GM18951 (cell line): ENCODE measurements at regions of chr7 and their contacts with region 1.

Region 1: DNA sequence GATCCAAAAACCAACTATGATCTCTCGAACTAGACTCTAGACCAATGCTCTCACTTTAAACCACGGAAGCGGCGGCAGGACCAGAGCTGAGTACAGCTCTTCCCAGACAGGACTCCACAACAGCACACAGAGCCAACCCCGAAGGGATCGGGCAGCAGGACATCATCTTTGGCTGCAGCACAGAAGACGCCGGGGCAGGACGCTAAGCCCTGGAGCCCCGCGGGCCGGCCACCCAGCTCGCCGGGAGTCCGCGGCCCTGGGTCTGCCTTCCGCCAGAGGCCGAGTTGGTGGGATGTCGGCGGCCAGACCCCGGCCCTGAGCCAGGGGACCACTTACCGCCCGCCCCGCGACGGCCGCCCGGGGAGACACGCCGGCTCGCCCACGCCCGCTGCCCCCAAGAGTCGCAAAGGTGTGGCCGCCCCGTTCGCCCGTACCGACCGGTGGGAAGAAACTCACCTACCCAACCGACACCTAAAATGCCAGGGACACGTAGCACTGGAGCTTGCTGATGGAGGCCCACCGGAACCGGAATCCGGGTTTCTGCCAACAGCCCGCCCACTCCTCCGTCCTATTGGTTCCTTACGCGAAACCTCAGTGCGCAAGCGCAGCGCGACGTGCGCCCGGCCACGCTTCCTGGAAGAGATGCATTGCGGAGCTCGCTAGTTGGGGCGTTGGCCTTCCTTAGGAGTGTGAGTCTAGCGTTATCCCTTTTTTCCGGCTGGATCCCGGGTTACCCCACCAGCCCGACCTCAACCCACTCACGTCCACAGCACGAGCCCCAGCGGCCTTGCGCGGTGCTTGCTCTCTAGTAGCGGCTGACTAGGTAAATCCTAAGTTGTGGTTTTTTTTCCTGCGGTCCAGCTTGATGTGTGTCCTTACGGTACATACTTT is at the start of gene SEC61G:
- POLR2A ChIP-seq: peak; percentile 96

Region 2: DNA sequence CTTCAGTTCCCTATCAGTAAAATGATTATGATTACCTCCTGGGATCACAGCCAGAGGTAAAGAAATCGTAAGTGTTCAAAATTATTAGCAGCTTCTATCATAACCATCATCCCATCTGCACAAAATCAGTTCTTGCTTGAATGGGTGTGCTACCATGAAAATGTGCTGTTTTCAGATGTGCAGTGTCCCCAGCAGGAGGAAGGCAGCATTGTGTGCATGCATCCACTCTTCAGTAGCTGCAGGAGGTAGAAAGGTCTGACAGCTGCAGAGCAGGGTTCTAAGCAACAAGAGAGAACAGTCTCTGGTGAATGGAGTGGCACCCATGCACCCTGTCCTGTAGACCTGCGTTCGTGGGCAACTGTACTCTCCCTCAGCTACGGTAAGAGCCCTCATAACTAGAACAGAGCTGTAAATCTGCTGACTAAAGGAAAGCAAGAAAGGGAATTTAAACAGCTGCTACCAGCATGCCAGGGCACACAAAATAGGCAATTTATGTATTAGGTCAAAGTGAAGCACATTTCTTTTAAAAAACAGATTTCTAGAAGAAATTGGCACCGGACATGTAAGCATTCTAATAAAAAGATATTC is 195.5 kb before region 1 on chr7:
- in situ Hi-C with region 1: no loop called
- POLR2A ChIP-seq: no peak

Region 3: DNA sequence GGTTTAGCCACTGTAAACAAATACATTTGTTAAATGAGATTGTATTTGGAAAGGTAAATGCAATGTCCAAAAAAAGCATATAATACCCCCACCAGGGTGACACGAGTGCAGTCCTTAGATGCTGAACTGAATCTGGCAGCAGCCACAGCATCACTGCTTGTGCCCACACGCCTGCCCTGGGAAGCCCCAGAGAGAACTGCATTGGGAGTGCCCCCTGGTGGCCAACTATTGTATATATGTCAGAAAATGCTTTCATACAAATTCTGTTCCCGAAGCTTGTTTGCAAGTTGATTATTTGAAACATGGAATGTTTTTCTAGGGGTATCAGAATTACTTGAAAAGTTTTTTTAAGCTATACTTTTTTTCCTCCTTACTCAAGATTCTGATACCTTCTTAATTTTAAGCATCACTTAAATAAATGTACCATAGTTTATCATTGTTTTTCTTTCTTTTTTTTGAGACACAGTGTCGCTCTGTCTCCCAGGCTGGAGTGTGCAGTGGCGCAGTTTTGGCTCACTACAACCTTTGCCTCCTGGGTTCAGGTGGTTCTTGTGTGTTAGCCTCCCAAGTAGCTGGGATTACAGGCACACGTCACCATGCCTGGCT is 656.3 kb after region 1 on chr7:
- in situ Hi-C with region 1: loop called (anchors 25 kb)
- POLR2A ChIP-seq: no peak